HAP-1 (cell line): ENCODE measurements at regions of chr10 and their contacts with region 1.

Region 1: DNA sequence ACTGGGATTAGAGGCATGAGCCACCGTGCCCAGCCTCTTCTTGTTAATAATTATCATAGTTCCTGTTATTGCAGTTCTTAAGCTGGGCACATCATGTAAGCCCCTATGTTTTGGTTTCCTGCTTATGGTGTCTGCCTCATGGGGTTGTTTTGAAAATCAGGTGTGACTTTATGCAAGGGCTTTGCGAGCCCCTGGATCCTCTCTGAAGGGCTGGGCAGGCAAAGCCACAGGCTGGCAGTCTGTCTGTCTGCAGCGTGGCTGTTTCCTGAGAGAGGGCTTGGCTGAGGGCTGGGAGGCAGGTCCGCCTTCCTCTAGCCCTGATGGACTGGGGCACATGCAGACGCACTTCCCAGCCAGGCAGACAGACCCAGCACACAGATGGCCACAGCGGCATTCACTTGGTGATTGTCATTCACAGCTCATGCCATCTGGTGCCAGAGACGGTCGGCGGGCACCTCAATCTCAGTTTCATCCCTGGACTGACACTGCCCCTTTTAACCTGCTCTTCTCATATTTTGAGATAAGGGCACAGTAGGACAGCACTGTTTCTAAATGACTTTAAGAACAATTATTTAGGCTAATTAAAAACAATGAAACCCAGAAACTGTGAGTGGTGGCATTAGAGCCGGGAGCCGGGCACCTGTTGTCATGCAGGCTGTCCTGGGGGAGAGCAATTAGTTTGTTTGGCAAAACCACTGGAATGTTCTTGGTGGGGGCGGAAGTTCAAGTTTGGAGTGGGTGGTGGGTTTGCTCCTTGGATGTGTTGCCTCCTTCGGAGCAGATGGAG is 35.5 kb downstream of the RBM20 start:
- DNase-seq: no peak
- H3K4me3 ChIP-seq: no peak overlapping the region
- H3K4me1 ChIP-seq: peaks cover 5% of the 10 kb centered on the region; the same call in 1 of the 2 replicates
- H3K27me3 ChIP-seq: 0 out of 2 replicates have a peak, but pooled peaks cover under 1% of the 10 kb centered on the region

Region 2: GRCh38 chr10:110110338-110110737 is 569.3 kb before region 1 on chr10:
- in situ Hi-C with region 1: no loop called
- DNase-seq: no peak
- H3K4me3 ChIP-seq: no peak overlapping the region
- H3K4me1 ChIP-seq: no peaks in the 10 kb centered on the region
- H3K27me3 ChIP-seq: no peaks in the 10 kb centered on the region

Region 3: DNA sequence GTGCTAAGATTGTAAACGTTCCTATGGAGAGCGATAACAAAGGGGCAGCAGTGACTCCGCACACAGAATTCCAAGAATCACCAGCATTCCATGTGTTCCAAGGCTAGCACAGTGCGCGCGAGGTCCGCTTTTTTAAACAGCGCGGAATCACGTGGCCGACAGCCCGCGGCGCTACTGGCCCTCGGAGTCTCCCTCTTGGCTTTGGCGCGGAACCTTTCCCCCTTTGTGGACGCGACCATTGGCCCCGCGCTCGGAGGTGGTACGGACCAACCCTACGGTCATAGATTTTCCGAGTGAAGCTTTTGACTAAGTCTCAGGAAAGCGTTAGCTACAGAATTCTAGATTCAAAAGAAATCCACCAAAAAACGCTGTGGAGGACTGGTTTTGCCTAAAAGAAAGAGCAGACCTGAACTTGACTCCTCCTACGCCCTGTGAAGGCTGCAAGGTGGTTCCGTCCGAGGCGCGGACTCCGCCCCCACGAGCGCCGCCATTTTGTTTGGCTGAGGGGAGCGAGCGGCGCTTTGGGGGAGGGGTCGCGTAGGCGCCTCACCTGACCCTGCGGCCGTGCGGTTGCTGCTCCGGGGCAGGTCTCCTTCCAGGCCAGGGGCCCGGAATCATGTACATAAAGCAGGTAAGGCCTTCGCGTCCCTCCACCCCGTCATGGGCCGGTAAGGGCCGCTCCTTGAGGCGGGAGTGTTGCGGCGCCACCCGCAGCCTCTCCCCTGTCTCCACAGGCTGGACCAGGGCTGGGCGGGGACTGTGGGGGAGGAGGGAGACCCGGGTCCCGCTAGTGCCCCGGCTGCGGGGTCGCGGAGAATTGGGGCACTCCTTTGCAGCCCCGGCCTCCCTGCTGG is 112.3 kb before region 1 on chr10 and contains the start of gene SMC3:
- in situ Hi-C with region 1: no loop called
- DNase-seq: peak; percentile 92 to 96
- H3K4me3 ChIP-seq: peak within 1 kb of the TSS; percentile 98
- H3K4me1 ChIP-seq: peaks cover 26% of the 10 kb centered on the region
- H3K27me3 ChIP-seq: peaks cover 7% of the 10 kb centered on the region

Region 4: DNA sequence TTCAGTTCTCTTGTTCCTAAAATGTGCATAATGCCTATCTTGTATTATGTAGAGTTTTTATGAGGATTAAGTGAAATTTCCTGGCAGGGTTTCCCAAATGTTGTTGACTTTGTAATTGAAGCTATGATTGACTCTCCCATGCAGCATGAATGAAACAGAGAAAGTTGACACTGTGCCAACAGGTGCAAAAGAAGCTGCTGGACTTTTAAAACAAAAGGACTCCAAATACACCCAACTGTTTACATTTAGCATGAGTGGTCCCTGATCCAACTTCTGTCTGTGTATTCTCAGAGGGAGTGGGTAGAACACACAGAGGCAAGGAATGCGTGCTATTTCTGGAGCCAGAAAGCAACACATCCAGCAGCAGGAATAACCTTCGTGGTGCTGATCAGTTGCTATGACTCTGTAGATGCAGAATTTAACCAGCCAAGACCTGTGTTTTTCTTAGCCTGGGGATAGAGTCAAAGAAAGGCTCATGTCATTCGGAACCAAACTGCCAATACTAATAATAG is 49.9 kb before region 1 on chr10:
- in situ Hi-C with region 1: loop called (anchors 5 kb)
- DNase-seq: peak; percentile 67 to 93
- H3K4me3 ChIP-seq: no peak overlapping the region
- H3K4me1 ChIP-seq: peaks cover 10% of the 10 kb centered on the region
- H3K27me3 ChIP-seq: peaks cover 82% of the 10 kb centered on the region